ENCODE measurements at regions of chr17 and their contacts with region 1.

Region 1: GRCh38 chr17:75632863-75633485 is at the start of gene SMIM5:
- DNase-seq: peak; percentile 72 to 77 (median 75)
- H3K4me3 ChIP-seq: no peak within 1 kb of the TSS
- H3K4me3 Mint-ChIP-seq: peak within 1 kb of the TSS in 1 of 8 donors; percentile 26
- H3K27ac ChIP-seq: no peak within 1 kb of the TSS
- H3K27ac Mint-ChIP-seq: peak within 1 kb of the TSS in 1 of 7 donors; percentile 18
- H3K4me1 ChIP-seq: peaks cover 13% of the 10 kb centered on the region
- H3K4me1 Mint-ChIP-seq: peaks cover 2 to 13% (median 7%) of the 10 kb centered on the region in 4 donors
- H3K27me3 ChIP-seq: no peaks in the 10 kb centered on the region
- H3K27me3 Mint-ChIP-seq: no peaks in the 10 kb centered on the region
- total RNA-seq, gene SMIM5: not detected

Region 2: DNA sequence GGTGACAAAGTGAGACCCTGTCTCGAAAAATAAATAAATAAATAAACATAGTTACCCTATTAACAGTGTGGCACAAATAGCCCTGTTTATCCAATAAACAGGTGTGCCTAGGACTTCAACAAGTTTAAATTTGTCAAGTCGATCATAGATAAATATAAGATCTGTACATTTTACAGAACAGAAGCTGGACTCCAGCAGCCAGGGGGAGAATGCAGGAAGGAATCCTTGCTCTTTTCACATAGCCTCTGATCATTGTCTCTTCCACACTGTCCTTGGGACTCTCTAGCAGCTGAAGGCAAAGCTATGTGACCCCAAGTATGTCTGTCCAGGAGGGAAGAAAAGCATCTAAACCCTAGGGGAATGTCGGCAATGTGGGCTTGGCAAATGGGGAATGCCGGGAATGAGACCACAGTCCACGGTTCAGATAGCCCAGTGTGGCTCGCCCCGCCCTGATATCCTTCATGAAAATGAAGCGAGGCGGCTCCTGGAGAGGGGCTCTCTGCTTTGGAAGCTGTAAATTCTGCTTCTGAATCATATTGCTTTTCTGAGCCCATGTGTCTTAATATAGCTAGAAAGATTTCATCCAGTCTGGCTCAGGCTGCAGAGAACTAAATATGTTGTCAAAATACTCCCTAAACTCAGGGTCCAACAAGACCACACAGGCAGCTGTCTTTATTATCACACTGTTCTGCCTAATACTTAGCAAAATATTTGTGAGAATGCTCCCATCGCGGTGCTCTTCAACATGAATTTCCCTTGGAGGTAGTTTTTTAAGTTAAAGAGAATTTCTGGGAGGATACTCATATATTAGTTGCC is 202.6 kb before region 1 on chr17:
- CTCF ChIA-PET with region 1: interaction called, 9 read pairs
- POLR2A ChIA-PET with region 1: no interaction called
- intact Hi-C with region 1: loop called (anchors 1 kb)
- DNase-seq: no peak
- H3K4me3 ChIP-seq: no peak overlapping the region
- H3K4me3 Mint-ChIP-seq: no peak overlapping the region
- H3K27ac ChIP-seq: no peak overlapping the region
- H3K27ac Mint-ChIP-seq: peak overlapping the region in 1 of 7 donors; percentile 47
- H3K4me1 ChIP-seq: peaks cover 15% of the 10 kb centered on the region
- H3K4me1 Mint-ChIP-seq: peaks cover 10 to 20% (median 15%) of the 10 kb centered on the region in 4 donors
- H3K27me3 ChIP-seq: no peaks in the 10 kb centered on the region
- H3K27me3 Mint-ChIP-seq: peaks cover 0 to 9% of the 10 kb centered on the region in 2 donors

Region 3: GRCh38 chr17:75487351-75488070 is 145.5 kb before region 1 on chr17:
- CTCF ChIA-PET with region 1: no interaction called
- POLR2A ChIA-PET with region 1: no interaction called
- intact Hi-C with region 1: no loop called
- DNase-seq: peak; percentile 37 to 52 (median 47)
- H3K4me3 ChIP-seq: peak overlapping the region in 1 of 2 donors; percentile 38
- H3K4me3 Mint-ChIP-seq: peak overlapping the region; percentile 50 to 88 (median 73)
- H3K27ac ChIP-seq: peak overlapping the region; percentile 22
- H3K27ac Mint-ChIP-seq: peak overlapping the region; percentile 84 to 99 (median 94)
- H3K4me1 ChIP-seq: peaks cover 21% of the 10 kb centered on the region
- H3K4me1 Mint-ChIP-seq: peaks cover 17 to 30% (median 26%) of the 10 kb centered on the region in 4 donors
- H3K27me3 ChIP-seq: no peaks in the 10 kb centered on the region
- H3K27me3 Mint-ChIP-seq: no peaks in the 10 kb centered on the region

Region 4: DNA sequence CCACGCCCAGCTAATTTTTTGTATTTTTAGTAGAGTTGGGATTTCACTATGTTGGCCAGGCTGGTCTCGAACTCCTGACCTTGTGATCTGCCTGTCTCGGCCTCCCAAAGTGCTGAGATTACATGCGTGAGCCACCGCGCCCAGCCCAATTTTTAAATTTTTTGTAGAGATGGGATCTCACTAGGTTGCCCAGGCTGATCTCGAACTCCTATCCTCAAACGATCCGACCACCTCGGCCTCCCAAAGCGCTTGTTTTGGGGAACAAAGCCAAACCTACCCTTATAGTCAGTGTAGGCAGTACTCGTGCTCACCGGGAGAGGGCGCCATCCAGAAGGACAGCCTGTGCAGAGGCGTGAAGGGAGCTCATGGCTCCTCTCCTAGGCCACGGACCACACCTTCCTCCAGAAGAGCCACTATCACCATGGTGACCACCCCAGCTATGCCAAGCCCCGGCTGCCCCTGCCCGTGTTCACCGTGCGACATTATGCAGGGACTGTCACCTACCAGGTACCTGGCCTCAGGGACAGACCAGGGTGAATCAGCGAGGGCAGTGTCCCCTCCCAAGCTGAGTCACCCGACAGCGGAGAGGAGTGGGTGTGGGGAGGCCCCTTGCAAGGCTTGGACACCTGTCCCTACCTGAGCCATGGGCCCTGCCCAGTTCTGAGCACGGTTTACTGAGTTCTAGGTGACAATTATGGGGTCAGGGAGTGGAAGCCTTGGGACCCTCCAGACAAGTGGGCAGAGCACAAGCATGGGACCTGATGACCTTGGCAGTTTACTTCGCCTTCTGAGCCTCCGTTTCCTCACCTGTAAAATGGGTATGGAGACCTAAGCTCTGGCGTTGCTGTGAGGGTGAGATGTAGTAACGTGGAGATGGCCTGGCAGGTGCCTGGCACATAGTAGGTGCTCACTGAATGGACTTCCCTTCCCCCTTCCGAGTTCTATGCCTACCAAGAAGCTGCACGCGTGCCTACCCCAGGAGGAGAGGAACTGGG is 31.6 kb before region 1 on chr17:
- CTCF ChIA-PET with region 1: interaction called, 13 read pairs
- POLR2A ChIA-PET with region 1: no interaction called
- intact Hi-C with region 1: no loop called
- DNase-seq: peak; percentile 41 to 62 (median 46)
- H3K4me3 ChIP-seq: no peak overlapping the region
- H3K4me3 Mint-ChIP-seq: no peak overlapping the region
- H3K27ac ChIP-seq: no peak overlapping the region
- H3K27ac Mint-ChIP-seq: peak overlapping the region in 1 of 7 donors; percentile 30
- H3K4me1 ChIP-seq: no peaks in the 10 kb centered on the region
- H3K4me1 Mint-ChIP-seq: peaks cover 0 to 3% (median 0%) of the 10 kb centered on the region in 4 donors
- H3K27me3 ChIP-seq: no peaks in the 10 kb centered on the region
- H3K27me3 Mint-ChIP-seq: no peaks in the 10 kb centered on the region

Region 5: DNA sequence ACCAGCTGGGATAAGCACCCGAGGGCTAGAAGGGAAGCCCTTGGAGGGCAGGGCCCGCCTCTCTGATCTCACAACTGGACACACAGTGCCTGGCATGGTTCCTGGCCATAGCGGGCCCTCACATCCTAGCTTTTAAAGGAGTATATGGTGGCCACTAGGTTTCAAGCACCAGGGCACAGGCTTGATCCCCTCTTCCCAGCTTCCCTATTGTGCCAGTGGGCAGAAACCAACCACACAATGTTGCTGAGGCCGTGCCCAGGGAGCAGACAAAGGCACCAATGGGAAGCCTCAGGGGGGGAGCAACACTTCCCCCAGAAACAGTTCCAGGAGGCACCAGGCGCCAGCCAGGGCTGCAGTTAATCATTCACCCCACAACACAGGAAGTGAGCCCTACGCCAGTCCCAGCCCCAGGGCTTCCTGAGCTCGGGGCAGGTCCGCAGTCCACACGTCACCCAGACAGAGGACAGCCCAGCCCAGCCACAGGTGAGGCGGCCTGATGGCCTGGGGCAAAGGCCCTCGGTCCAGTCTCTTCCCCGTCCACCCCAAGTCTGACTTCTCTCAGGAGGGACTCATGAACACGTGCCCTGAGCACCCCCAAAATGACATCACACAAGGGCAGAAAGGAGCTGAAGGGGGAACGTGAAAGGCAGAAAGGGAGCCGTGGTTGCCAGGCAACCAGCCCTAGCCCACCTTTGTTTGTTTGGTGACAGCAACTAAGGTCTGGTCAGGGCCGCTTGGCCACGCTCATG is 13.1 kb after region 1 on chr17:
- CTCF ChIA-PET with region 1: interaction called, 48 read pairs
- POLR2A ChIA-PET with region 1: no interaction called
- intact Hi-C with region 1: no loop called
- DNase-seq: no peak
- H3K4me3 ChIP-seq: no peak overlapping the region
- H3K4me3 Mint-ChIP-seq: no peak overlapping the region
- H3K27ac ChIP-seq: no peak overlapping the region
- H3K27ac Mint-ChIP-seq: peak overlapping the region in 2 of 7 donors; percentile 7 to 87
- H3K4me1 ChIP-seq: no peaks in the 10 kb centered on the region
- H3K4me1 Mint-ChIP-seq: peaks cover 0 to 9% (median 0%) of the 10 kb centered on the region in 4 donors
- H3K27me3 ChIP-seq: no peaks in the 10 kb centered on the region
- H3K27me3 Mint-ChIP-seq: no peaks in the 10 kb centered on the region

Region 6: DNA sequence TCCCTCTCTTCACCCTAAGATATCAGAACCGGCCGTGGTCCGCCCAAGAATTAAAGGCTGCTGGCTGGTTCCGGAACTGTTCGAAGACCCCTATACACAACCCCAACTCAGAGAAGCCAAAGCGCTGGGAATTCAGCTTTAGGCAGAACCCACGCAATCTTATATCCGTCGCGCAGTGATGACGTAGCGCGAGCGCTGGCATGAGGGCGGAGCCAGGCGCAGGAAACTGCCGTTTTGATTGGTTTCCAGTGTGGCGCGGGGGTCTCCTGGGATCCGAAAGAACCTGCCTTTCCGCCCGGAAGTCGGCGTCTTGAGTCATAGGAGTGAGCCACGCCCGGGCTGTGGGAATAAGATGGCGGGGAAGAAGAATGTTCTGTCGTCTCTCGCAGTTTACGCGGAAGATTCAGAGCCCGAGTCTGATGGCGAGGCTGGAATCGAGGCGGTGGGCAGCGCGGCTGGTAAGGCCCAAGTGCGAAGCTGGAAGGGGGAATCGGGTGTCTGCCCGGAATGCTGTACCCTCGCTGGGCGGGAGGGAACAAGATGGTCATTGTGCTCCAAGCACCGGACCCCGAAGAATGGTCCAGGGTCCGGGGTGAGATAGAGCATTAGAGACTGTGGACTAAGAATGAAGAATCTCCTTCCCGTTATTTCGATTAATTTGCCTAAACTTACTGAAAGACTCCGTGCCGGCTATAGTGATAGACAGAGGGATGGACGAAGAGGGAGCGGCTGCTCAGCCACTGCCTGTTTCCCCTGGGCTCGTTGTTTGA is 34.2 kb after region 1 on chr17 and contains the starts of genes RECQL5 and SAP30BP:
- CTCF ChIA-PET with region 1: interaction called, 10 read pairs
- POLR2A ChIA-PET with region 1: interaction called, 7 read pairs
- intact Hi-C with region 1: no loop called
- DNase-seq: peak; percentile 94 to 98 (median 96)
- H3K4me3 ChIP-seq: peak within 1 kb of the TSS; percentile 72 to 85
- H3K4me3 Mint-ChIP-seq: peak within 1 kb of the TSS; percentile 21 to 74 (median 54)
- H3K27ac ChIP-seq: peak within 1 kb of the TSS; percentile 95
- H3K27ac Mint-ChIP-seq: peak within 1 kb of the TSS in 5 of 7 donors; percentile 29 to 72 (median 52)
- H3K4me1 ChIP-seq: peaks cover 25% of the 10 kb centered on the region
- H3K4me1 Mint-ChIP-seq: peaks cover 14 to 23% (median 18%) of the 10 kb centered on the region in 4 donors
- H3K27me3 ChIP-seq: no peaks in the 10 kb centered on the region
- H3K27me3 Mint-ChIP-seq: no peaks in the 10 kb centered on the region
- total RNA-seq, gene RECQL5: 58.3 to 59.1 TPM
- total RNA-seq, gene SAP30BP: 115 to 119 TPM

Region 7: GRCh38 chr17:75689441-75689873 is 56.5 kb after region 1 on chr17:
- CTCF ChIA-PET with region 1: interaction called, 20 read pairs
- POLR2A ChIA-PET with region 1: no interaction called
- intact Hi-C with region 1: no loop called
- DNase-seq: peak; percentile 37 to 59 (median 55)
- H3K4me3 ChIP-seq: no peak overlapping the region
- H3K4me3 Mint-ChIP-seq: peak overlapping the region in 5 of 8 donors; percentile 7 to 58 (median 36)
- H3K27ac ChIP-seq: no peak overlapping the region
- H3K27ac Mint-ChIP-seq: peak overlapping the region; percentile 49 to 87 (median 77)
- H3K4me1 ChIP-seq: peaks cover 20% of the 10 kb centered on the region
- H3K4me1 Mint-ChIP-seq: peaks cover 32 to 57% (median 37%) of the 10 kb centered on the region in 4 donors
- H3K27me3 ChIP-seq: no peaks in the 10 kb centered on the region
- H3K27me3 Mint-ChIP-seq: no peaks in the 10 kb centered on the region

Region 8: DNA sequence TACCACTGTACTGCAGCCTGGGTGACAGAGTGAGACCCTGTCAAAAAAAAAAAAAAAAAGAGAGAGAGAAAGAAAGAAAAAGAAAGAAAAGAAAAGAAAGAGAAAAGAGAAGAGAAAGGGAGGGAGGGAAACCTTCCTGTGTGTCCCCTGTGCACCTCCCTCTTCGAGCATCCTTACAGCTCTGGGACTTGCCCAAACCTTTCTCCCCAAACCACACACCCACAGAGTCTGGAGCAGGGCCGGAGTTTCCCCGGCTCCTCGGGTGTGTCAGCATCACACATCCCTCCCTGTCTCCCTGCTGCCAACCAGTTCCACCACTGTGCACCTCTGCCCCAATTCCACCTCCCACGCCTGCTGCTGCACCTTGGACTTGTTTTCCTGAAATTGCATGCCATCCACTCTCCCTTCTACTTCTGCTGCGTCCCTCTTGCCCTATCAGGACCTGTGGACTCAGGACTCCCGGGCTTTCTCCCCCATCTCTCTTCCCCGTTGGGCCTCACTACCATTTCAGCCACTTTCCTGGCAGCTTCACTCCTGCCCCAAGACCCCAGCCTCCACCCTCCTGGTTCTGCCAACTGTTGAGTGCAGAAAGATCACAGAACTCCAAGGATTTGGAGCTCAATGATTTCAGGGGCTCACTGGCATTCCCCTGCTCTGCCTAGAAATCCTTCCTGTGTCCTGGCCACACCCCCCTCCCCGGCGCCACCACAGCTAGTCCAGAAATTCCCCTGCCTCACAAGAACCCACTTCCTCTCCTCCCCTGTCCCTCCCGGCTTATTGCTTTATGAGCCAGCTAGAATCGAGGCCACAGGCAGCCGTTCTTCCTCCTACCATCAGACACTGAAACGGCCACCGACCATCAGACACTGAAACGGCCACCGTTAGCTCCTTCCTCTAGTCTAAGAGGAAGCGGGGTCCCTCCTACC is 364.0 kb after region 1 on chr17:
- CTCF ChIA-PET with region 1: no interaction called
- POLR2A ChIA-PET with region 1: no interaction called
- intact Hi-C with region 1: no loop called
- DNase-seq: peak in 3 of 5 donors; percentile 15 to 23 (median 17)
- H3K4me3 ChIP-seq: peak overlapping the region in 1 of 2 donors; percentile 2
- H3K4me3 Mint-ChIP-seq: peak overlapping the region in 7 of 8 donors; percentile 26 to 79 (median 61)
- H3K27ac ChIP-seq: peak overlapping the region; percentile 48
- H3K27ac Mint-ChIP-seq: peak overlapping the region; percentile 71 to 94 (median 88)
- H3K4me1 ChIP-seq: peaks cover 14% of the 10 kb centered on the region
- H3K4me1 Mint-ChIP-seq: peaks cover 10 to 26% (median 15%) of the 10 kb centered on the region in 4 donors
- H3K27me3 ChIP-seq: no peaks in the 10 kb centered on the region
- H3K27me3 Mint-ChIP-seq: no peaks in the 10 kb centered on the region